ENCODE measurements at regions of chr12 and their contacts with region 1.

Region 1: DNA sequence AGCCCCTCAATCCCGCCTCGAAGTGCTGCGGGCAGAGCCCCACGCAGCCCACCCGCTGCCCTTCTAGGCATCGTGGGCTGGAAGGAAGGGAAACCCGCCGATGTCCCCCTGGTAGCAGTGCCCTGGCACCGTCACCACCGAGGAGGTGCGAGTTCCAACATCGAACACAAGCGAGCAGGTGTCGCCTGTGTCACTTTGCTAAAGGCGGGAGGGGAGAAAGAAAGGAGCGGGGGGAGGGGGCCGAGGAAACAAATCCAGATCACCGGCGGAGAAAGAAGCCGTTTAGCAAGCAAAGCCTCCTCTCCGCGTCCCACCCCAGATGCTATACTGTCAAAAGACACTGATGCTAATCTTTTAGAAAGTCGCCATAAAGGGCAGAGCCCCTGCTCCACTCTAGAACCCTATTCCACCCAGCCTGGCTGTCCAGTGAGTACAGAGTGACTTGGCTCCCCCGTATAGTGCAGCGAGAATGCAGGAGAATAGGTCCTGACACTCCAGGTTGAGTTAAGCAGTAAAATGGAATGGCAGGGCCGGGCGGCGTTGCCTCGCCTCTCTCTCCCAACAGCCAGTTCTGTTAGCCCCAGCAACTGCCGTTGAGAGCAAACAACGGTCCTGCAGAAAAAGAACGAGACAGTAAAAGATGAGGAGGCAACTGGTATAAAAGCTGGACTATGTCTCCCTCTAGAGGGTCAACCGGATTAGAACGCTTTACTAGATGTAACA is 67.9 kb upstream of the USP15 start:
- DNase-seq: peak; percentile 14 to 85 (median 72)
- ATAC-seq: peak; percentile 92
- H3K4me3 ChIP-seq: peak overlapping the region; percentile 40
- H3K4me3 Mint-ChIP-seq: peak overlapping the region; percentile 84 to 95 (median 90)
- H3K27ac ChIP-seq: no peak overlapping the region
- H3K27ac Mint-ChIP-seq: peak overlapping the region in 2 of 9 donors; percentile 9 to 63
- H3K4me1 ChIP-seq: peaks cover 22 to 23% of the 10 kb centered on the region in 2 donors
- H3K4me1 Mint-ChIP-seq: peaks cover 8 to 27% (median 24%) of the 10 kb centered on the region in 7 donors
- H3K27me3 ChIP-seq: peaks cover 12 to 19% of the 10 kb centered on the region in 2 donors
- H3K27me3 Mint-ChIP-seq: peaks cover 25 to 80% (median 39%) of the 10 kb centered on the region in 5 donors

Region 2: GRCh38 chr12:61487728-61488127 is 704.6 kb before region 1 on chr12:
- CTCF ChIA-PET with region 1: no interaction called
- POLR2A ChIA-PET with region 1: no interaction called
- intact Hi-C with region 1: loop called in 1 of 2 experiments (anchors 5 kb)
- DNase-seq: no peak
- ATAC-seq: no peak
- H3K4me3 ChIP-seq: no peak overlapping the region
- H3K4me3 Mint-ChIP-seq: no peak overlapping the region
- H3K27ac ChIP-seq: no peak overlapping the region
- H3K27ac Mint-ChIP-seq: no peak overlapping the region
- H3K4me1 ChIP-seq: no peaks in the 10 kb centered on the region
- H3K4me1 Mint-ChIP-seq: no peaks in the 10 kb centered on the region
- H3K27me3 ChIP-seq: no peaks in the 10 kb centered on the region
- H3K27me3 Mint-ChIP-seq: no peaks in the 10 kb centered on the region

Region 3: GRCh38 chr12:61870658-61871484 is 321.5 kb before region 1 on chr12:
- CTCF ChIA-PET with region 1: no interaction called
- POLR2A ChIA-PET with region 1: no interaction called
- intact Hi-C with region 1: loop called in 1 of 2 experiments (anchors 10 kb)
- DNase-seq: peak in 7 of 9 donors; percentile 5 to 45 (median 25)
- ATAC-seq: peak; percentile 79
- H3K4me3 ChIP-seq: no peak overlapping the region
- H3K4me3 Mint-ChIP-seq: no peak overlapping the region
- H3K27ac ChIP-seq: no peak overlapping the region
- H3K27ac Mint-ChIP-seq: no peak overlapping the region
- H3K4me1 ChIP-seq: peaks cover 0 to 10% of the 10 kb centered on the region in 2 donors
- H3K4me1 Mint-ChIP-seq: peaks cover 0 to 7% (median 3%) of the 10 kb centered on the region in 7 donors
- H3K27me3 ChIP-seq: no peaks in the 10 kb centered on the region
- H3K27me3 Mint-ChIP-seq: peaks cover 0 to 11% (median 0%) of the 10 kb centered on the region in 5 donors

Region 4: DNA sequence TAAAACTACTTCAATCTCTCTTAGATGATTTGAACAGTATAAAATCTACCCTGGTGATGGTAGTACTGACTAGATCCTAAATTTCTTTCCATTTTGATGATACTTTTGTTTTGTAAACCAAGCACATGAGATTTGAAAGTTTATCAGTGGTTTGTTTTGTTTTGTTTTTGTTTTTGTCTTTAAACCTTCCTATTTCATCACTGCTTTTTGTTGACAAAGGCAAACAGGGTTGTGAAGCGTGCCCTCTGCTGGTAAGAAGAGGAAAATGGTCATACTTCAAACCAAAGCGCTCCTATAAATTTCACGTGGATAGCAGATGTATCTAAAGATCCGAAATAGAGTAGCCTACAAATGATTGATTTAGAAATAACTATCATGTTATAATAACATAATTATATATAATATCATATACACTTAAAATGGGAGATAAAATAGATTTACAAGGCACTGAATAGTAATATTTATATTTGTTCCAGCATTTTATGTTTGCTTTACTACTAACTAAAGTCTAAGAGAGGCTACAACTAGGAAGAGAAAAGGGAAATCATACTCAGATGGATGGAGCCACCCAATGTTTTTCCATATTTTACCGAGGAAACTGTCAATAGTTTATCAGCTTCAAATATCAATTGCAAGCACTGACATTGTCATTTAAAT is 186.1 kb before region 1 on chr12:
- CTCF ChIA-PET with region 1: no interaction called
- POLR2A ChIA-PET with region 1: no interaction called
- intact Hi-C with region 1: loop called (anchors 1 kb)
- DNase-seq: peak in 6 of 9 donors; percentile 2 to 28 (median 10)
- ATAC-seq: peak; percentile 47
- H3K4me3 ChIP-seq: no peak overlapping the region
- H3K4me3 Mint-ChIP-seq: no peak overlapping the region
- H3K27ac ChIP-seq: no peak overlapping the region
- H3K27ac Mint-ChIP-seq: no peak overlapping the region
- H3K4me1 ChIP-seq: no peaks in the 10 kb centered on the region
- H3K4me1 Mint-ChIP-seq: no peaks in the 10 kb centered on the region
- H3K27me3 ChIP-seq: no peaks in the 10 kb centered on the region
- H3K27me3 Mint-ChIP-seq: peaks cover 0 to 5% (median 3%) of the 10 kb centered on the region in 5 donors

Region 5: GRCh38 chr12:62158461-62159360 is 33.6 kb before region 1 on chr12:
- CTCF ChIA-PET with region 1: interaction called, 6 read pairs
- POLR2A ChIA-PET with region 1: no interaction called
- intact Hi-C with region 1: loop called in 1 of 2 experiments (anchors 1 kb)
- DNase-seq: peak in 7 of 9 donors; percentile 16 to 75 (median 58)
- ATAC-seq: peak; percentile 57
- H3K4me3 ChIP-seq: no peak overlapping the region
- H3K4me3 Mint-ChIP-seq: peak overlapping the region in 9 of 10 donors; percentile 48 to 84 (median 69)
- H3K27ac ChIP-seq: no peak overlapping the region
- H3K27ac Mint-ChIP-seq: peak overlapping the region in 8 of 9 donors; percentile 57 to 96 (median 78)
- H3K4me1 ChIP-seq: peaks cover 0 to 31% of the 10 kb centered on the region in 2 donors
- H3K4me1 Mint-ChIP-seq: peaks cover 3 to 66% (median 57%) of the 10 kb centered on the region in 7 donors
- H3K27me3 ChIP-seq: no peaks in the 10 kb centered on the region
- H3K27me3 Mint-ChIP-seq: peaks cover 0 to 8% (median 0%) of the 10 kb centered on the region in 5 donors

Region 6: DNA sequence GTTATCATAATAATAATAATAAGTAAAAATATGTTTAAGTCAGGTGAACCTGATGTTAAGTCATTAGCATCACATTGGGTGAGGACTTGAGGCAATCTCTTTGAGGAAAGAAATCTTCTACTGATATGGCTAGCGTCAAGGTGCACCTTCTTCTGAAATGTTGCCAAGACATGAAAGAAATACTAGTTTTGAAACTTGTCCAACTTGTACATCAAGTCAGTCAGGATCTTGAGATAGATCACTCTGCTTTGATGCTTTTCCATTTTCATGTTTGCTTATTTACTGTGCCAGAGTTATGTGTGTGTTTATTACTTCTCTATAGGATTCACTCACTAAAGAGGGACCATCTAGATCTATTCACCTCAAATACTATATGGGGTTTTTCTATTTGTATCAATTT is 22.1 kb before region 1 on chr12:
- CTCF ChIA-PET with region 1: no interaction called
- POLR2A ChIA-PET with region 1: no interaction called
- intact Hi-C with region 1: no loop called
- DNase-seq: no peak
- ATAC-seq: no peak
- H3K4me3 ChIP-seq: no peak overlapping the region
- H3K4me3 Mint-ChIP-seq: no peak overlapping the region
- H3K27ac ChIP-seq: no peak overlapping the region
- H3K27ac Mint-ChIP-seq: no peak overlapping the region
- H3K4me1 ChIP-seq: no peaks in the 10 kb centered on the region
- H3K4me1 Mint-ChIP-seq: peaks cover 0 to 5% (median 0%) of the 10 kb centered on the region in 7 donors
- H3K27me3 ChIP-seq: no peaks in the 10 kb centered on the region
- H3K27me3 Mint-ChIP-seq: peaks cover 0 to 9% (median 5%) of the 10 kb centered on the region in 5 donors

Region 7: DNA sequence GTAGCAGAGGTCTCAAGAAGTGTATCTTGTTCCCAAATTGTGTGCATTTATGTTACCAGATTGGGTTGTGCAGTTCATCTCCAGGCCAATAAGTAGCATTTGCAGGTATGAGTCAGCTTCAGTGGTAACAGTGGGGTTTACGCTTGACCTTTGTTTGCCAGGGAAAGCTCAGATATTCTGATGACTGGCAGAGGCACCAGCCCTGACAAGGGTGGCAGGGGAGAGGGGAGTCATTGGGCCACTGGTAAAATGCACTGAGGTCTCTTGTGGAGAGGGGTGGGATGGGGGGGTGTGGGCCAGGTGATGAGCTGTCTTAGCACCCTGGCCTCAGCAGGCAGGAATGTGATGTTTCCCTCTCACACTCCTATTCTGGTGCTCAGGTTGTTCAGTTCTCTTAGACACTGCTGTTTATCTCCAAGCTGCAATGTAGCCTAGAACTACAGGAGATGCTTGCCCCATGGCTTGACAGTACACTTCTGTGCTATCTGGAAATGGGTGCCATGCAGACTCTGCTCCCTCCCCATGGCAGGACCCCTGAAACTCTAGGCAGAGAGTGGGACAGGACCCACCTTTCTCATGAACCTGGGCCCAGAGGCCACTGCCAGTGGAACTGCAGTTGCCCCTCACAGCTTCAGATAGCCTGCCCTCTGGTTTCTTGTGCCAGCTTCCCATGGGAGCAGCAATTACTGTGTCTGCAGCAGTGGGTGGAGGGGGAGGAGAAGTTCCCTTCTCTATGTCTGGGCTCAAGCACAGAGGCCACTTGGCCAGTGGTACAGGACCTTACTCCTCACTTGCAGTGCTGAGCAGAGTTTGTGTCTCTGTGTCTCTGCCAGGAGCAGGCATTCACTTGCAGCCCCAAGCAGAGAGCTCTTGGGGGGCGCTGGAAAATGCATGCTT is 99.8 kb after region 1 on chr12:
- CTCF ChIA-PET with region 1: no interaction called
- POLR2A ChIA-PET with region 1: no interaction called
- intact Hi-C with region 1: no loop called
- DNase-seq: no peak
- ATAC-seq: peak; percentile 28
- H3K4me3 ChIP-seq: no peak overlapping the region
- H3K4me3 Mint-ChIP-seq: peak overlapping the region in 5 of 10 donors; percentile 21 to 56 (median 53)
- H3K27ac ChIP-seq: no peak overlapping the region
- H3K27ac Mint-ChIP-seq: peak overlapping the region in 2 of 9 donors; percentile 14 to 82
- H3K4me1 ChIP-seq: peaks cover 9% of the 10 kb centered on the region in 2 donors
- H3K4me1 Mint-ChIP-seq: peaks cover 45 to 91% (median 86%) of the 10 kb centered on the region in 7 donors
- H3K27me3 ChIP-seq: no peaks in the 10 kb centered on the region
- H3K27me3 Mint-ChIP-seq: no peaks in the 10 kb centered on the region

Region 8: DNA sequence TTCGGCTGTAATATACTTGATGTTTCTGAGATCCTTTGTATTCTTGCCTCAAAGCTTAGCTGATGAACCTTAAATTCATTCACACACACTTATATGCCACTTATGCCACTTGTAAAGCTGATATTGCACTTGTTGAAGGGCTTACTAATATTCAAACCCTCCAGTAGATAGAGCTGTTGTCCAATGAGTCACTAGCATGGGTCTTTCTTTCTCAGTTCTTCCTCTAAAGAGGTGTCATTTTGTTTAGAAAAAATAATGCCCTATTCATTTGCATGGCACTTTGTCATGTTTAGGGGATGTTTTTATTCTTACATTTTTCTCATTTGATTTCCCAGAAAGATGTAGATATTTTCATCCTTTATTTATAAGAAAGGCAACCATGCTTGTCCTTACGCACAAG is 330.6 kb after region 1 on chr12:
- CTCF ChIA-PET with region 1: interaction called, 11 read pairs
- POLR2A ChIA-PET with region 1: no interaction called
- intact Hi-C with region 1: no loop called
- DNase-seq: no peak
- ATAC-seq: peak; percentile 31
- H3K4me3 ChIP-seq: no peak overlapping the region
- H3K4me3 Mint-ChIP-seq: no peak overlapping the region
- H3K27ac ChIP-seq: no peak overlapping the region
- H3K27ac Mint-ChIP-seq: peak overlapping the region in 5 of 9 donors; percentile 23 to 82 (median 67)
- H3K4me1 ChIP-seq: peaks cover 0 to 7% of the 10 kb centered on the region in 2 donors
- H3K4me1 Mint-ChIP-seq: peaks cover 13 to 64% (median 59%) of the 10 kb centered on the region in 7 donors
- H3K27me3 ChIP-seq: no peaks in the 10 kb centered on the region
- H3K27me3 Mint-ChIP-seq: no peaks in the 10 kb centered on the region

Region 9: DNA sequence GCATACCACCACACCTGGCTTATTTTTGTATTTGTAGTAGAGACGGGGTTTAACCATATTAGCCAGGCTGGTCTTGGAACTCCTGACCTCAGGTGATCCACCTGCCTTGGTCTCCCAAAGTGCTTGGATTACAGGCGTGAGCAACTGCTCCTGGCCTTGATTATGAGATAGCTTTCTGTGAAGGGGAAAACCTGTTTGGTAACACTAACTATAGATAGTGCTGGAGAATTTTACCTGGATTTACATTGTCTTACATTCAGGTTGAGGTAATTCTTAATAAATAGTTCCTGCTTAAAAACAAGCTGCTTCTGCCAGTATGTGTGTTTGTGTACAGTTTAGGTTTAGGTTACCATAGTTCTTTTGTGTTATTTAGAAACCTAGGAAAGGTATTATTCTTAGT is 351.4 kb after region 1 on chr12:
- CTCF ChIA-PET with region 1: no interaction called
- POLR2A ChIA-PET with region 1: no interaction called
- intact Hi-C with region 1: no loop called
- DNase-seq: no peak
- ATAC-seq: no peak
- H3K4me3 ChIP-seq: no peak overlapping the region
- H3K4me3 Mint-ChIP-seq: no peak overlapping the region
- H3K27ac ChIP-seq: no peak overlapping the region
- H3K27ac Mint-ChIP-seq: peak overlapping the region in 1 of 9 donors; percentile 54
- H3K4me1 ChIP-seq: no peaks in the 10 kb centered on the region
- H3K4me1 Mint-ChIP-seq: peaks cover 0 to 5% (median 0%) of the 10 kb centered on the region in 7 donors
- H3K27me3 ChIP-seq: no peaks in the 10 kb centered on the region
- H3K27me3 Mint-ChIP-seq: no peaks in the 10 kb centered on the region

Region 10: GRCh38 chr12:62977419-62977818 is 785.1 kb after region 1 on chr12:
- CTCF ChIA-PET with region 1: no interaction called
- POLR2A ChIA-PET with region 1: no interaction called
- intact Hi-C with region 1: no loop called
- DNase-seq: no peak
- ATAC-seq: no peak
- H3K4me3 ChIP-seq: no peak overlapping the region
- H3K4me3 Mint-ChIP-seq: no peak overlapping the region
- H3K27ac ChIP-seq: no peak overlapping the region
- H3K27ac Mint-ChIP-seq: no peak overlapping the region
- H3K4me1 ChIP-seq: no peaks in the 10 kb centered on the region
- H3K4me1 Mint-ChIP-seq: no peaks in the 10 kb centered on the region
- H3K27me3 ChIP-seq: no peaks in the 10 kb centered on the region
- H3K27me3 Mint-ChIP-seq: peaks cover 0 to 4% (median 0%) of the 10 kb centered on the region in 5 donors

Measured in naive thymus-derived CD4-positive, alpha-beta T cell (primary cell).